Endothelial cell of umbilical vein (primary cell): ENCODE measurements at regions of chr7 and their contacts with region 1.

Region 1: GRCh38 chr7:39609113-39609934 is 14.0 kb upstream of the RALA start:
- DNase-seq: peak; percentile 89
- H3K4me3 ChIP-seq: peak overlapping the region in 2 of 3 experiments; percentile 16 to 25
- H3K27ac ChIP-seq: peak overlapping the region; percentile 99
- H3K4me1 ChIP-seq: peaks cover 75% of the 10 kb centered on the region
- H3K27me3 ChIP-seq: no peaks in the 10 kb centered on the region
- CTCF ChIP-seq: peak; percentile 30 to 42
- POLR2A ChIP-seq: peak; percentile 14

Region 2: DNA sequence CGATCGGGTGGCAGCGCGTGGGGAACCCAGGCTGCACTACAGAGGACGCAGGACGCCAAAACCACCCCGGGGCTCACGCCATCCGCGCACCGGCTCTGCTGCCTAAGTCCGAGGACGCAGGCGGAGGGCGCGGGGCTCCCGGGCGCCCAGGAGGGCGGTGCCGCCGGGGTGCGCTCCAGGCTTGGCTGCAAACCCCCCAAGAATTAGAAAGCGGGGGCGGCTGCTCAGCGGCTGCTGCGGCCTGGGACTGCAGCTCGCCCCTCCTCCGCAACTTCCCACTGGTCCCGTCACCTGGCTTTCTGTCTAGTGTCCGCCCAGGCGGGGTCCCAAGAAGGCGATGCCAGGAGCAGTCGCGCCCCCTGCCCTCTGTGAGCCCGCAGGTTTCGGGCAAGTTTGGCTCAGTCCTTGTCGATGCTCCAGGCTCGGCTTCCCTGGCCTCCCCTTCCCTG is 633.4 kb before region 1 on chr7:
- CTCF ChIA-PET with region 1: no interaction called
- POLR2A ChIA-PET with region 1: no interaction called
- dilution Hi-C with region 1: no loop called
- intact Hi-C with region 1: no loop called
- DNase-seq: no peak
- H3K4me3 ChIP-seq: no peak overlapping the region
- H3K27ac ChIP-seq: no peak overlapping the region
- H3K4me1 ChIP-seq: no peaks in the 10 kb centered on the region
- H3K27me3 ChIP-seq: peaks cover 7 to 31% of the 10 kb centered on the region in 2 experiments
- CTCF ChIP-seq: no peak
- POLR2A ChIP-seq: no peak

Region 3: DNA sequence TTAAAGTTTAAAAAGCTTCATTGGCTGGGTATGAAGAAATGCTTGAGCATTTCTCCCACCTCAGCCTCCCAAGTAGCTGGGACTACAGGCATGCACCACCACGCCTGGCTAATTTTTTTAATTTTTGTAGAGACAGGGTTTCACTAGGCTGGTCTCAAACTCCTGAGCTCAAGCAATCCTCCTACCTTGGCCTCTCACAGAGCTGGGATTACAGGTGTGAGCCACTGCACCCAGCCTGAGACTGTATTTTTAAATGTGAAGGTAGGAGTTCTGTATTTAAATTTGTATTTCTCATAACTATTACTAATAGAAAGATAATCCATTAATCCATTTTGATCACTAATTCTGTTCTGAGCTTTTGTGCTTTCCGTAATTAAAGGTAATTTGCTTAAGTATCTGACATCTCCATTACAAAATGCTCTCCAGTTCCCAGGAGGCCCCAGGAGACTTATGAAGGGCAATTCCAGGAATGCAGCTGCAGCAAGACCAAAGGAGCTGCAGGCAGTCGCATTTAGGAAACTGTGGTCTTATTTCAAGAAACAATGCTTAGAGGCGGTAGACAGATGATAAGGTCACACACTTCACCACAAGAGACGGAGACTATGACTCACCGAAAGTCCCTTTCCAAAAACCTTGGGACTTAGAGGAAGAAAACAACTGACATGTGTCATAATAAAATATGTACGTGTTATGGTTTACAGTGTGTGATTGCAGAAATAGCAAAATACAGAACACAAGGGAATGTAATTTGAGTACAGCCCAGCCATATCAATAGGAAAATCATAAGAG is 19.8 kb before region 1 on chr7:
- CTCF ChIA-PET with region 1: interaction called, 10 read pairs
- POLR2A ChIA-PET with region 1: interaction called, 12 read pairs
- dilution Hi-C with region 1: no loop called
- intact Hi-C with region 1: loop called (anchors 1 kb)
- DNase-seq: peak; percentile 99
- H3K4me3 ChIP-seq: no peak overlapping the region
- H3K27ac ChIP-seq: peak overlapping the region; percentile 98
- H3K4me1 ChIP-seq: peaks cover 70% of the 10 kb centered on the region
- H3K27me3 ChIP-seq: no peaks in the 10 kb centered on the region
- CTCF ChIP-seq: no peak
- POLR2A ChIP-seq: peak; percentile 38

Region 4: DNA sequence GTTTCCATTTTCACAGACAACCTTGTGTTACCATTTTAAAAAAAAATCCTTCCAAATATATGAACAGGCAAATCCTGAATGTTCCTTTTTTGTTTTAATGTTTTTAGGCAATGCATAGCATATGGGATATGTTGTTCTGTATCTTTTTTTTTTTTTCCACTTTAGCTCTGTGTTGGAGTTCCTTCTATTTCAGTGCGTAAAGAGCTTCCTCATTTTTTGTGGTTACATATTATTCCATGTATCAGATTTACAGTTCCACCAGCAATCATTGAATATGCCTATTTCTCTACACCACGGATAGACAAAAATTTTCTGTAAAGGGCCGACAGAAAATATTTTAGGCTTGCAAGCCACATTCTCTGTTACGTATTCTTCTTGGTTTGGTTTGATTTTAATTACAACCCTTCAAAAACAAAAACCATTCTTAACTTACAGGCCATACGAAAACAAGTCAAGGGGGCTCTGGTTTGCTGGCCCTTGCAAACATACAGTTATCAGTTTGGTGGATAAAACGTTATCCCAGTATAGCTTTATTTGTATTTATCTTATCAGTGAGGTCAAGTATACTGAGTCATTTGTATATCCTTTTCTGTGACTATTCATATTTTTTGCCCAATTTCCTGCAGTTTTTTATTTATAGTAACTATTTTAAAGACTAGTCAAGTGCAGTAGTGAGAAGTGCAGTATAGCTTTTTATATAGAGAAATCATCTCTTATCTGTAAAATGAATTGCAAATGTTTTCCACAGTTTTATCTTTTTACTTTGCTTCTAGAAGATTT is 69.8 kb after region 1 on chr7:
- CTCF ChIA-PET with region 1: no interaction called
- POLR2A ChIA-PET with region 1: no interaction called
- dilution Hi-C with region 1: no loop called
- intact Hi-C with region 1: loop called (anchors 2 kb)
- DNase-seq: peak; percentile 35
- H3K4me3 ChIP-seq: no peak overlapping the region
- H3K27ac ChIP-seq: peak overlapping the region; percentile 37
- H3K4me1 ChIP-seq: peaks cover 45% of the 10 kb centered on the region
- H3K27me3 ChIP-seq: no peaks in the 10 kb centered on the region
- CTCF ChIP-seq: no peak
- POLR2A ChIP-seq: no peak

Region 5: DNA sequence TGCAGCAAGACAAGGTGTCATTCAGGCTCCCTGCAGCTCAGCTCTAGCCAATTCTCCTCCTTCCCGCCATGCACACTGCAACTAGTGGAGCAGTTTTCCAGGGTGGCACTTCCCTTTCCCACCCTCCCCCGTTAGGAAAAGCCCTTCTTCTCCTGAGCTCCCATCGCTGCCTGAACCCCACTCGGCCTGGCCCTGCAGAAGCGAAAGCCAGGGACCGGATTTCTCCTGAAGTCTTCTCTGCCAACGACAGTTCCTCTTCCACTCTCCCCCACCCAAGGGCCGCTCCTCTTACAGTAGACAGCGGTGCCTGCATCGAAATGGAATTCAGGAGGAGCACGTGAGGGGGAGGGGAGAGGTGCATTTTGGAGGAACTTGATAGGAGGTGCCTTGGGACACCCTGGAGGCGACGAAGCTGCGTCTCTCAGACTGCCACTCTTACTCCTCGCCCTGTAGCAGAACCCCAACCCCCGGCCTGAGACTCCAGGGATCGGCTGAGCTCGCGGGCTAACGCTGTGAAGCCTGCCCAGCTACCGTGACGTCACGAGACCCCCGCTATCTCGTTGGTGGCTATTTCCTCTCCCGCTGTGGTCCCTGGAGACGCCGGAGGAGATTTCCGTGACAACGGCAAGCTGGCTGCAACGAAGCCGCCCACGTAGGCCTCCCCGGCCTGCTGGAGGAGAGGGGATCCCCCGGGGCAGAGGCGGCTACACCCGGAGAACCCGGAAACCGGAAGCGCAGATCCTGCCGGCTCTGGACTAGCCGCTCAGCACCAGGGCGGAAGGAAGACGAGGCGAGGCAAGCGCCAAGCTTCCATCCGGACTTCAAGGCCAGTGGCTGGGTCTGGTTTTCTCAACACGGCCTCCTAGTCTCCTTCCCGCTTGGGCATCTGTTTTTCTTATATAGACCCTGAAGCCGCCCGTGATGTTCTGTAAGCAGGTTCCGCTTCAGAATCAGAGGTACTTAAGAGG is 123.8 kb after region 1 on chr7:
- CTCF ChIA-PET with region 1: no interaction called
- POLR2A ChIA-PET with region 1: no interaction called
- dilution Hi-C with region 1: no loop called
- intact Hi-C with region 1: loop called (anchors 1 kb)
- DNase-seq: peak; percentile 93
- H3K4me3 ChIP-seq: peak overlapping the region; percentile 31 to 46 (median 42)
- H3K27ac ChIP-seq: peak overlapping the region; percentile 84
- H3K4me1 ChIP-seq: peaks cover 23% of the 10 kb centered on the region
- H3K27me3 ChIP-seq: no peaks in the 10 kb centered on the region
- CTCF ChIP-seq: no peak
- POLR2A ChIP-seq: peak; percentile 34

Region 6: GRCh38 chr7:39948956-39949928 is 339.9 kb after region 1 on chr7:
- CTCF ChIA-PET with region 1: no interaction called
- POLR2A ChIA-PET with region 1: no interaction called
- dilution Hi-C with region 1: no loop called
- intact Hi-C with region 1: loop called (anchors 5 kb)
- DNase-seq: peak; percentile 100
- H3K4me3 ChIP-seq: peak overlapping the region; percentile 0 to 76 (median 73)
- H3K27ac ChIP-seq: peak overlapping the region; percentile 81
- H3K4me1 ChIP-seq: peaks cover 19% of the 10 kb centered on the region
- H3K27me3 ChIP-seq: no peaks in the 10 kb centered on the region
- CTCF ChIP-seq: no peak
- POLR2A ChIP-seq: peak; percentile 95